PC-9 (cell line): ENCODE measurements at regions of chr3 and their contacts with region 1.

Region 1: DNA sequence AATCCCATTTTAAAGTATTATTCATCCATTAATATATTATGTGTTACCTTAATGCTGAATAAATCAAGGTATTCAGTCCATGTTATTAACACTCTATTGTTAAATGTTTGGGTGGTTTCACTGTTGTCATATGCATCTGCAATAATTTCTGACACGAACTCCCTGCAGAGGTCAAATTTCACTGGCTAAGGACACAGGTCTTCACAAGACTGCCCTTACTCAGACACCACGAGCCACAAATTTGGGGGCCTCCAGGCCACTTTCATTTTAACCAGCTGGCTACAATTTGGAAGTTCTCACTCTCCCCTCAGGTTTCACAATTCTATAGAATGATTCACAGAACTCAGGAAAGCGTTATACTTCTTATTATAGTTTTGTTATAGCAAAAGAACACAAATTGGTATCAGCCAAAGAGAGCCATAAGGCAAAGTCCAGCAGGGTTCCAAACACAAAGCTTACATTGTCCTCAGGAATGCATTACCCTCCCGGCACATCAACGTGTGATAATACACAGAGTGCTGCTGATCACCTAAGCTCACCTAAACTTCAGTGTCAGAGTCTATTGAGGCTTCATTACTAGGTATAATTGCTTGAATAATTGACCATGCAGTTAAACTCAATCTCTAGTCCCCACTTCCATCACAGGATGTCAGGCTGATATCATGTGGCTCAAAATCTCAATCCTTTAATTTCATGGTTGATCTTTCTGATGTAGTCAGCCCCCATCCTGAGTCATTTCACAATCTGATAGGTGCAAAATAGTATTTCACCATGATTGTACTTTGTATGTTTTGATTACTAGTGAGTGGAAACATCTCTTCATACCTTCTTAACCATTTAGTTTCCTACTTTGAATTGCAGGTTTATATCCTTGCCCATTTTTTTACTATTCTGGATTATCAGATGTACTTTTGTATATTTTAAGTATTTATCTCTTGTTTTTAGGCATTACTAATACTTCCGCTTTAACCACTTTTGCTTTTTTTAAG is 441.4 kb upstream of the AGTR1 start:
- DNase-seq: no peak
- H3K4me3 ChIP-seq: no peak overlapping the region
- H3K27ac ChIP-seq: no peak overlapping the region
- H3K4me1 ChIP-seq: no peaks in the 10 kb centered on the region
- H3K27me3 ChIP-seq: no peaks in the 10 kb centered on the region
- CTCF ChIP-seq: no peak

Region 2: DNA sequence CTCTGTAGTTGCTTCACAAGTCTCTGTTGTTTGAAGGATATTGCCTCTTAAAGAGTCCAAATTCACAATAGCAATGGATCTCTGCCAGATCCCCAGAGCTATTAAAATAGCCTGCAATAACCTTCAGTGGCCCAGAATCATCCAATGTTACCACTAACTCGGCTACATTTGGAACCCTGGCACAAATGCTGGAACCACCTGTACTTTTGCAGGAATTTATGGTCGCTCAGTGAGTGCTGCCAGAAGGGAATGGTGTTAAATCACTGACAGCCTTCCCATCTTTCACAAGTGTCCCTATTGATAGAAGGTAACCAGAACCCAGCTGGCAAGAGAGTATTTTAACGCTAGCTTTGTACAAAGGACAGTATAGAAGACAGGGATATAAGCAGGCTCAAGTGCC is 1352.3 kb before region 1 on chr3:
- CTCF ChIA-PET with region 1: no interaction called
- POLR2A ChIA-PET with region 1: interaction called, 16 read pairs
- intact Hi-C with region 1: no loop called
- DNase-seq: no peak
- H3K4me3 ChIP-seq: no peak overlapping the region
- H3K27ac ChIP-seq: no peak overlapping the region
- H3K4me1 ChIP-seq: no peaks in the 10 kb centered on the region
- H3K27me3 ChIP-seq: no peaks in the 10 kb centered on the region
- CTCF ChIP-seq: no peak